GM10248 (cell line): ENCODE measurements at regions of chr14 and their contacts with region 1.

Region 1: DNA sequence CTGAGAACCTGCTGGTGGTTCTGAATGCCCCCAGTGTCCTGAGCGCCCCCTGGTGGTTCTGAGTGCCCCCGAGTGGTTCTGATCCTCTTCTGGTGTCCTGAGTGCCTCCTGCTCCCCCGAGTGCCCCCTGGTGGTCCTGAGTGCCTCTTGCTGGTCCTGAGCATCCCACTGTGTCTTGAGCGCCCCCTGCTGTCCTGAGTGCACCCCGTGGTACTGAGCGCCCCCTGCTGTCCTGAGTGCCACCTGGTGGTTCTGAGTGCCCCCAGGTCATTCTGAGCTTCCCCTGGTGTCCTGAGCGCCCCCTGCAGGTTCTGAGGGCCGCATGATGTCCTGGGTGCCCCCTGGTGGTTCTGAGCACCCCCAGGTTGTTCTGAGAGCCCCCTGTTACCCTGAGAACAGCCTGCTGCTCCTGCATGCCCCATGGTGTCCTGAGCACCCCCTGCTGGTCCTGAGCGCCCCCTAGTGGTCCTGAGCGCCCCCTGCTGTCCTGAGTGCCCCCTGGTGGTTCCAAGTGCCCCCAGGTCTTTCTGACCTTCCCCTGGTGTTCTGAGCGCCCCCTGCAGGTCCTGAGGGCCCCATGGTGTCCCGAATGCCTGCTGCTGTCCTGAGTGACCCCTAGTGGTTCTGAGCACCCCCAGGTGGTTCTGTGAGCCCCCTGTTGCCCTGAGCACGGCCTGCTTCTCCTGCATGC is 1165.4 kb downstream of the TMEM121 start:
- DNase-seq: peak; percentile 78
- CTCF ChIP-seq: peak; percentile 100

Region 2: DNA sequence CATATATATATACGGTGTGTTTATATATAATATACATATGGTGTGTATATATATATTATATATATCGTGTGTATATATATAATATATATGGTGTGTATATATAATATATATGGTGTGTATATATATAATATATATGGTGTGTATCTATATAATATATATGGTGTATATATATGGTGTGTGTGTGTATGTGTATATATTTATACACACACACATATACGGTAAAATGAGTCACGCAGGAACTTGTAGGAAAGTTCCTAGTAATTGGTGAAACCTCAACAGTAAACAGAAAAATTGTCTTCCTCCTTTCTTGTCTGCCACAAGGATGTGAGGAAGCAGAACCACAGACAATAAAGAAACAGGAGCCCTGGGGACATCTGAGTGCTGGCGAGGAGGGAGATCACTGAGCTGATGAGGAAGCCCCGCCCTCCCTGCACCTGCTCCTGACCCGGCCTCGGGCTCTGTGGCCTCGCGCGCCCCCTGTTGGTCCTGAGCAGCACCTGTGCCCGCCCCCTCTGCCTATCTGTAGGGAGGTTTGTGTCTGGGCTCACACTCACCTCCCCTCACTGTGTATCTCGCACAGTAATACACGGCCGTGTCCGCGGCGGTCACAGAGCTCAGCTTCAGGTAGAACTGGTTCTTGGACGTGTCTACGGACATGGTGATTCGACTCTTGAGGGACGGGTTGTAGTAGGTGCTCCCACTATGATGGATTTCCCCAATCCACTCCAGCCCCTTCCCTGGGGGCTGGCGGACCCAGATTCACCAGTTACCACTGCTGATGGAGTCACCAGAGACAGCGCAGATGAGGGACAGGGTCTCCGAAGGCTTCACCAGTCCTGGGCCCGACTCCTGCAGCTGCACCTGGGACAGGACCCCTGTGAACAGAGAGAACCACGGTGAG is 85.9 kb before region 1 on chr14:
- CTCF ChIA-PET with region 1: interaction called, 19 read pairs
- POLR2A ChIA-PET with region 1: no interaction called
- DNase-seq: peak; percentile 74
- CTCF ChIP-seq: peak; percentile 90

Region 3: DNA sequence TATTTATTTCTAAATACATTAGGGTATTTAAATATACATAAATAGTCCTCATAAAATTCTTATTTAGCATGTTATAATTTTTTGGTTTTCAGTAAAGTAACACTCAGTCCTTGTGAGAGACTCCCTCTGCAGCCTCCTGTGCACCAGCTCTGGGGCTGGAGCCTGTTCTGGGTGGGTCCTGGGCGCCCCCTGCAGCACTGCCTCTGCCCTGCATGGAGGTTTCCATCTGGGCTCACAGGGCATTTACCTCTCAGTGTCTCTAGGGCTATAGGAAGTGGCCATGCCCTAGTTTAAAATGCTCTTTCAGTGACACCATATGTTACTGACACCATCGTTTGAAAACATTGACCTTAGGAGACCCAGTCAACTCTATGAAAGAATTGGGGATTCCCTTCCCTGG is 10.2 kb before region 1 on chr14:
- CTCF ChIA-PET with region 1: interaction called, 51 read pairs
- POLR2A ChIA-PET with region 1: no interaction called
- DNase-seq: no peak
- CTCF ChIP-seq: no peak

Region 4: GRCh38 chr14:106766145-106766544 is 74.4 kb after region 1 on chr14:
- CTCF ChIA-PET with region 1: interaction called, 14 read pairs
- POLR2A ChIA-PET with region 1: no interaction called
- DNase-seq: no peak
- CTCF ChIP-seq: no peak

Region 5: DNA sequence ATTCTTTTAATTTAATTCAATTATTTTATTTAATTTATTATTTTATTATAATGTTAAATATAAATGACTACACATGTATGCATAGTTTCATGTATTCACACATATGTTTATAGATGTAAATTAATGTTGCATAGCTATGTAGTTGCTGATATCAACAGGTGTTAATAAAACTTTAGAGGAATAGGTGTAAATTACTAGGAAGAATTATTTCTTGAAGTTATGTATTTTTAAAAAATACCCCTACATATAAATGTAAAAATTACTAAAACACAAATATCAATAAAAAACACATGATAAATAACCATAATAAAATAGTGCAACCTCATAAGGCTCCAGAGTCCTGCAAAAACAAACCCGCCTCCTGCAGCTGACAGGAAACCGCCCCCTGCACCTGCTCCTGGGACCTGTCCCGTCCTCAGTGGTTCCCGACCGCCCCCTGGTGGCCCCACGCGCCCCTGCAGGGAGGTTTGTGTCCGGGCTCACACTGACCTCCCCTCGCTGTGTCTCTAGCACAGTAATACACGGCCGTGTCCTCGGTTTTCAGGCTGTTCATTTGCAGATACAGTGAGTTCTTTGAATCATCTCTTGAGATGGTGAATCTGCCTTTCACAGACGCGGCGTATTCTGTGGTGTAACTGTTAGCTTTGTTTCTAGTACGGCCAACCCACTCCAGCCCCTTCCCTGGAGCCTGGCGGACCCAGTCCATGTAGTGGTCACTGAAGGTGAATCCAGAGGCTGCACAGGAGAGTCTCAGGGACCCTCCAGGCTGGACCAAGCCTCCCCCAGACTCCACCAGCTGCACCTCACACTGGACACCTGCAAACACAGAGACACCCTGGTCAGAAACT is 98.7 kb after region 1 on chr14:
- CTCF ChIA-PET with region 1: interaction called, 14 read pairs
- POLR2A ChIA-PET with region 1: no interaction called
- DNase-seq: peak; percentile 77
- CTCF ChIP-seq: peak; percentile 83